MCF 10A (cell line): ENCODE measurements at regions of chr19 and their contacts with region 1.

Region 1: GRCh38 chr19:12333162-12334159 is at the start of gene ZNF563:
- DNase-seq: peak; percentile 87
- H3K4me3 Mint-ChIP-seq: peak within 1 kb of the TSS; percentile 97
- H3K27ac Mint-ChIP-seq: peak within 1 kb of the TSS; percentile 89
- H3K4me1 Mint-ChIP-seq: peaks cover 11% of the 10 kb centered on the region
- H3K27me3 Mint-ChIP-seq: no peaks in the 10 kb centered on the region
- CTCF ChIP-seq: no peak
- total RNA-seq, gene ZNF563: 1.1 and 1.3 TPM in 2 replicates

Region 2: DNA sequence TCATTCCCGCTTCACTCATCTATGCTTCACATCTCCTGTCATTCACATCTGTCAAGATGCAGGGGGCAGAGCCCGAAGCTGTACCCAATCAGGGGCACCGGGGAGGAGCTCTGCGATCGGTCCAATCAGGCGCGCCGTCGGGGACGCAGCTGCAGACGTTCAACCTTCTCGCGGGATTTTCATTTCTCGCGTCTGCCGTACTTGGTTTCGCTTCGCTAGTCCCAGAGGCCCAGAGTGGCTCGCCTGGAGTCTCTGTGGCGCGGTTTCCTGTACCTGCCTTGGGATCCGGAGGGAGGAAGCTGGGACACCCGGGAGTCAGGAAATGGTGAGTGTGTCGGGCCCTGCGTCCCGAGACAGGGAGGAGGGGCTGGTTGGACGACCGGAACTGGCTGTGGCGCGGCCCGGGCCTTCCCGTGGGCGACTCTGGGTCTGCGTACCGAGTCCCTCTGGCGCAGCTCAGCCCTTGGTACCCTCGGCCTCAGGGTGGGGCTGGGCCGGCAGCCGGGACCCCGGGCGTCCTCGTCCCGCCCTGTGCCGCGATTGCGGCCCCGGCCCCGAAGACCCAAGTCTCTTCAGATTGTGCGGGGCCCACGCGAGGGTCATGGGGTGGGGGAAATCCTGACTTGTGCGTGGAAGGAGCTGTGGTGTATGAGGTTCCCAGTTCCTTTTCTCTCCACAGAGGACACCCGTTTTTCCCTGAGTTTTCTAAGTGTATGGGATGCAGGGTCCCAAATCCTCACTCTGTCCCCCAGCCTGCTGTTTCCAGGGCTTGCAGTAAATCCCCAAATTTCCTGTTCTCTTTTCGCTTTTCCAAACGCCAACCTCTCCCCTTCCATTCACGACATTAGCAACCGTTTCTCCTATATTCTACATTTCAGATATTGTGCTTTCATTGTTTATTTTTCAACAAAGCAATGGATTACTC is 170.3 kb before region 1 on chr19 and contains the start of gene ZNF136:
- CTCF ChIA-PET with region 1: no interaction called
- POLR2A ChIA-PET with region 1: interaction called, 3 read pairs
- intact Hi-C with region 1: loop called (anchors 2 kb)
- DNase-seq: peak; percentile 96
- H3K4me3 Mint-ChIP-seq: peak within 1 kb of the TSS; percentile 83
- H3K27ac Mint-ChIP-seq: peak within 1 kb of the TSS; percentile 97
- H3K4me1 Mint-ChIP-seq: peaks cover 8% of the 10 kb centered on the region
- H3K27me3 Mint-ChIP-seq: no peaks in the 10 kb centered on the region
- CTCF ChIP-seq: no peak
- total RNA-seq, gene ZNF136: 3.7 and 4.3 TPM in 2 replicates

Region 3: GRCh38 chr19:12187625-12188024 is 145.8 kb before region 1 on chr19:
- CTCF ChIA-PET with region 1: no interaction called
- POLR2A ChIA-PET with region 1: no interaction called
- intact Hi-C with region 1: no loop called
- DNase-seq: peak; percentile 0
- H3K4me3 Mint-ChIP-seq: no peak overlapping the region
- H3K27ac Mint-ChIP-seq: no peak overlapping the region
- H3K4me1 Mint-ChIP-seq: no peaks in the 10 kb centered on the region
- H3K27me3 Mint-ChIP-seq: no peaks in the 10 kb centered on the region
- CTCF ChIP-seq: no peak

Region 4: DNA sequence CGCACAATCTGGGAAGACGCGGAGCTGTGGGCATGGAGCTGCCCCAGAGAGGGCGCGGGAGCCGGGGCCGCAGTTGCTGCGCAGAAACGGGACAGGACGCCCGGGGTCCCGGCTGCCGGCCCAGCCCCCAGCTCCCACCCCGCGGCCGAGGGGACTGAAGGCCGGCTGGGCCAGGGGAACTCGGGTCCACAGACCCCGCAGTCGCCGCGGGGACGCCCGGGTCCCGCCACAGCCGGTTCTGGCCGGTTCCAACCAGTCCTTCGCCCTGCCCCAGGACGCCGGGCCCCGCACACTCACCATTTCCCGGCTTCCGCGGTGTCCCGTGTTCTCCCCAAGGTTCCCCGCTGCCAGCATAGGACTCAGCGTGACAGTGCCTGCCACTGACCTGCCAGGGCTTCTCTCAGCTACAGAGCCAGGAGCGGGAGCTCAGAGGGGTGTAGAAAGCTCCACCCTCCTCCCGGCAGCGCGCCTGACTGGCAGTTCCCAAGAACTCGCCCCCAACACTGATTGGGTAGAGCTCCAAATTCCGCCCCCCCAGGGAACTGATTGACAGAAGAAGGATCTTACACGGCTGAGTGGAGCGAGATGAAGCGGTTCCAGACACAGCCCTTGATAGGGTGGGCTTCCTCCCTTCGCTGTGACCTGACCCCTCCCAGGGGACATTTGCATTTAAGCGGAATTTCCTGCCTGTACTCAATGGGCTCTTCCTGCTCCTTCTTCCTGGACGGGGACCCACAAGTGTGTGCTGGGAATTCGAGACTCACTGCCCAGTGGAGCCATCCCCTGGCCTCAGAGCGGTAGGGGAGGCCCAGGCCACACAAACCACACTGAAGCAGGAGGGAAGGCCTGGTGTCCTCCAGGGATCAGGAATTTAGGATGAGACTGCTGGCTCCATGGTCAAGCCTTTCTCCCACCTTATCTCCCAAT is 32.0 kb after region 1 on chr19 and contains the start of gene ZNF442:
- CTCF ChIA-PET with region 1: interaction called, 4 read pairs
- POLR2A ChIA-PET with region 1: interaction called, 11 read pairs
- intact Hi-C with region 1: no loop called
- DNase-seq: peak; percentile 3
- H3K4me3 Mint-ChIP-seq: peak within 1 kb of the TSS; percentile 82
- H3K27ac Mint-ChIP-seq: no peak within 1 kb of the TSS
- H3K4me1 Mint-ChIP-seq: no peaks in the 10 kb centered on the region
- H3K27me3 Mint-ChIP-seq: no peaks in the 10 kb centered on the region
- CTCF ChIP-seq: no peak
- total RNA-seq, gene ZNF442: 0.44 and 0.49 TPM in 2 replicates